ENCODE measurements at regions of chr16 and their contacts with region 1.

Region 1: DNA sequence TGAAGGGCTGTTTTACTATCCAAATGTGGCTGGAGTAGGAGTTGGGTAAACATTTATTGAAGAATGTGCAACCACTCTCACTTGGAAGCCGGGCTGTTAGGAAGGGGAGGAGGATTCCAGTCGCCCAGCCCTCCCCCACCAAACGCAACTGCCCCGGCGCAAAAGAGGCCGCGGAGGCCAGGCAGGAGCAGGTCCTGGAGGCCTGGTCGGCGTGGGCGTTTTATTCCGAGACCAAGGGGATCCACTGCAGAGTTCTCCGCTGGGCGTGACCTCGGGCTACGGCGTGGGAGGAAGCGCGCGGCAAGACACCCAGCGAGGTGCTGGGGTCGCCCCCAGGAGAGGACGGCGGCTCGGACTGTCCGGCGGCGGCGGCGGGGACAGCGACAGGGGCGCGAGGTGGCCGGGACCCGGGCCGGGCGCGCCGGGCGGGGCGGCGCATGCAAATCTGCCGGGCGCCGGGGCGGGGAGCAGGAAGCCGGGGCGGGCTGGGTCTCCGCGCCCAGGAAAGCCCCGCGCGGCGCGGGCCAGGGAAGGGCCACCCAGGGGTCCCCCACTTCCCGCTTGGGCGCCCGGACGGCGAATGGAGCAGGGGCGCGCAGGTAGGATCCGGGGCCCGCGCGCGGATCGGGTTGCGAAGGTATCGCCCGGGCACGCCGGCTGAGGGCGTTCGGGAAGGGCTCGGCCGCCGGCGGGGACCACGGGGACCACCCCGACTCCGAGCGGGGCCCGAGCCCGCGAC is at the start of gene IL4R:
- DNase-seq: peak; percentile 70
- H3K4me3 ChIP-seq: peak within 1 kb of the TSS; percentile 61 to 87 (median 70)
- H3K27ac ChIP-seq: peak within 1 kb of the TSS; percentile 89
- H3K4me1 ChIP-seq: peaks cover 34% of the 10 kb centered on the region
- H3K27me3 ChIP-seq: no peaks in the 10 kb centered on the region
- CTCF ChIP-seq: no peak
- total RNA-seq, gene IL4R: 69.8 to 152 TPM

Region 2: GRCh38 chr16:27179500-27180072 is 134.0 kb before region 1 on chr16:
- CTCF ChIA-PET with region 1: no interaction called
- dilution Hi-C with region 1: no loop called
- in situ Hi-C with region 1: no loop called
- intact Hi-C with region 1: loop called (anchors 5 kb)
- DNase-seq: peak; percentile 42
- H3K4me3 ChIP-seq: no peak overlapping the region
- H3K27ac ChIP-seq: no peak overlapping the region
- H3K4me1 ChIP-seq: peaks cover 13% of the 10 kb centered on the region
- H3K27me3 ChIP-seq: no peaks in the 10 kb centered on the region
- CTCF ChIP-seq: peak; percentile 82 to 90

Region 3: DNA sequence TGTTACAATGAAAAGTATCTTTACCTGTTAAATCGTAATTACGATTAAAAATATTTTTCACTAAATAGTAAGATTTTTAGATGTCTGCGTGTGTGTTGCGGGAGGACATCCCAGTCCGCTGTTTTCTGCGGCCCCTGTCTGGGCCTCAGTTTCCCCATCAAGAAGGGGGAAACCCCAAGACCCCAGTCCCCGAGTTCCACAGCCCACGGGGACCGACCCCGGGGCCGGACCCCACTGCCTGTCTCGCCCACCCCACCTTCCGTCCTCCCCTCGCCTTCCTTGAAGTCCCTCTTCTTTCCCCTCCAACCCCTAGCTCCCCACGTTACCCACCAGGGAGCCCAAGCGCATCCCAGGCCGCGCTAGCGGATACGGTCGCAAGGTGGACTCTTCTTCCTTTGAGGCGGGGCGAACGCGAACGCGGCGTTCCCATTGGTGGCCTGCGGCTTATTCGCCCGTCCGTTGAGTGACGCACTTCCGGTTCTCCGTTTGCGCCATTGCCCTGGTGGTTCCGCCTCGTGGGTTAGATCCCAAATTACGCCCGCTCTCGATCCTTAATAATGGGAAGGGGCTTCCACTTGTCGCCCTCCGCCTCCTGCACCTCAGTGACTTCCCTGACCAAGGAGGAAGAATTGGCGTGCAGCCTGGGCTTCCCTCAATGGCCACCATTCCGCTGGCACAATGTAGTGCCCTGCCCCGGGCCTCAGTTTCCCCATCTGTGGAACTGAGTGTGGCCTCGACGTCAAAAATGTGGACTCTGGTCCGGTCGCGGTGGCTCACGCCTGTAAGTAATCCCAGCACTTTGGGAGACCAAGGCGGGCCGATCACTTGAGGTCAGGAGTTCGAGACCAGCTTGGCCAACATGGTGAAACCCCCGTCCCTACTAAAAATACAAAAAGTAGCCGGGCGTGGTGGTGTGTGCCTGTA is 45.0 kb before region 1 on chr16 and contains the start of gene NSMCE1:
- CTCF ChIA-PET with region 1: interaction called, 3 read pairs
- dilution Hi-C with region 1: loop called (anchors 5 kb)
- in situ Hi-C with region 1: loop called in 1 of 2 experiments (anchors 5 kb)
- intact Hi-C with region 1: loop called (anchors 2 kb)
- DNase-seq: peak; percentile 91
- H3K4me3 ChIP-seq: peak within 1 kb of the TSS; percentile 78 to 90 (median 87)
- H3K27ac ChIP-seq: peak within 1 kb of the TSS; percentile 59
- H3K4me1 ChIP-seq: peaks cover 13% of the 10 kb centered on the region
- H3K27me3 ChIP-seq: no peaks in the 10 kb centered on the region
- CTCF ChIP-seq: peak in 1 of 2 donors; percentile 31
- total RNA-seq, gene NSMCE1: 71.6 to 81.2 TPM

Region 4: GRCh38 chr16:27326738-27327585 is 13.4 kb after region 1 on chr16:
- CTCF ChIA-PET with region 1: interaction called, 8 read pairs
- dilution Hi-C with region 1: no loop called
- in situ Hi-C with region 1: no loop called
- intact Hi-C with region 1: loop called (anchors 1 kb)
- DNase-seq: peak; percentile 96
- H3K4me3 ChIP-seq: no peak overlapping the region
- H3K27ac ChIP-seq: peak overlapping the region; percentile 92
- H3K4me1 ChIP-seq: peaks cover 66% of the 10 kb centered on the region
- H3K27me3 ChIP-seq: no peaks in the 10 kb centered on the region
- CTCF ChIP-seq: peak in 1 of 2 donors; percentile 8

Region 5: DNA sequence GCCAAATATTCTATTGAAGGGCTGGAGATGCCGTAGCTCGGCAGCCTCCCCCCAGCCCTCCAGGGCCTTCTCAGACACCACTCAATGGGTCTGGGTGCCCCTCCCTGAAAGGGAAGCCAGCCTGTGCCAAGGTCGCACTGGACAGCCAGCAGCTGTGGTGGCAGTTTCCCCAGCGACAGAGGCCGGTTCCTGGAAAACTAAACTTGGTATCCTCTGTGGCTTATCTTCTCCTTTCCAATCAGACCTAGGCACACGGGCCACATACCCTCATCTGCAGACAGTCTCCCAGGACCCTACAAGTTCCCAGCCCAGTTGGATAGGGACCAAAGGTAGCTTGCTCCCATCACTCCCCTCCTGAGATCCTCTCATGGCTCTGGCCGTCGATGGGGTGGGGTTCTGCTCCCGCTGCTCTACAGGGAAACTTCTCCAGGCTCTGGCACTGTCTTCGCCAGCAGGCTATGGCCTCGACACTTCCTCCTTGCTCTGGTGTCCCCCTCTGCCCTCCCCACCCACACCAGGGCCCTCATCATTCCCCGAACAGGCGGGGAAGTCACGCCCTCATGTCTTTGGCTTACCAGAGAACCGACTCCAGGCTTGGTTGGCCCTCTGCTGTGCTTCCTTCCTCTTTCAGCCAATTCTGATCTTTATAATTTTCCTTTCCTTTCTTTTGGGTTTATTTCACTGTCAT is 70.1 kb after region 1 on chr16:
- CTCF ChIA-PET with region 1: no interaction called
- dilution Hi-C with region 1: loop called (anchors 5 kb)
- in situ Hi-C with region 1: no loop called
- intact Hi-C with region 1: no loop called
- DNase-seq: no peak
- H3K4me3 ChIP-seq: no peak overlapping the region
- H3K27ac ChIP-seq: no peak overlapping the region
- H3K4me1 ChIP-seq: no peaks in the 10 kb centered on the region
- H3K27me3 ChIP-seq: no peaks in the 10 kb centered on the region
- CTCF ChIP-seq: no peak

Measured in mammary epithelial cell (primary cell).